ENCODE measurements at regions of chr3 and their contacts with region 1.

Region 1: DNA sequence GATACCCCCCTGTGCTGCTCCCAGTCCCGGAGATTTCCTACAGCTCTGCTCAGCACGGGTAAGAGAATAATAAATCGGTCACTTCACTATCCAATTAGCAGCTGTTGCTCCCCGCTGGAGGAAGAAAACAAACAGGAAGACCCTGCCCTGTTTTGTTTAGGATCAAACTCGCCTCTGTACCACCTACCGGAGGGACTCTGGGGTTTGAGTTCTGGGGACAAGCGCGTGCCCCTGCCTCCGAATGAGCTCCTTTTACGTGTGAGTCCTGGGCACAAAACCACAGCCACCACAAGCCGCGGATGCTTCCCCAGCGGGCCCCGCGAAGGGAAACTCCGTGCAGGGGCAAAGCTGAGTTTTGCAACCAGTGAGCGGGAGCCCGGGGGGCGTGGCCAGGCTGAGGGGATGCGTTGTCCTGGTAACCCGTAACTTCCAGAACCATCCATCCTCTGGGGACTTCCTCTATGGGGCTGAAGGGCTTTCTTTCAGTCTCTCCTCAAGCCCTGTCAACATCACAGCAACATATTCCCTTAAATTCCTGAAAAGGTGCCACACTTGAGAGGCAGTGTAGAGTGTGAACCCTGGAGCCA is 315.7 kb upstream of the PROK2 start:
- DNase-seq: peak; percentile 99 to 100 (median 99)
- H3K4me3 ChIP-seq: peak overlapping the region; percentile 47 to 66 (median 48)
- H3K4me3 Mint-ChIP-seq: peak overlapping the region; percentile 81 to 91
- H3K27ac ChIP-seq: peak overlapping the region; percentile 97 to 99
- H3K27ac Mint-ChIP-seq: peak overlapping the region; percentile 100
- H3K4me1 ChIP-seq: peaks cover 60 to 61% of the 10 kb centered on the region in 2 donors
- H3K4me1 Mint-ChIP-seq: peaks cover 65% of the 10 kb centered on the region
- H3K27me3 ChIP-seq: no peaks in the 10 kb centered on the region
- H3K27me3 Mint-ChIP-seq: peaks cover 1 to 7% (median 1%) of the 10 kb centered on the region in 3 donors
- CTCF ChIP-seq: no peak

Region 2: GRCh38 chr3:71548705-71549384 is 551.8 kb before region 1 on chr3:
- intact Hi-C with region 1: no loop called
- DNase-seq: peak in 1 of 3 donors; percentile 31
- H3K4me3 ChIP-seq: peak overlapping the region in 1 of 3 experiments; percentile 70
- H3K4me3 Mint-ChIP-seq: no peak overlapping the region
- H3K27ac ChIP-seq: peak overlapping the region; percentile 86 to 87
- H3K27ac Mint-ChIP-seq: peak overlapping the region; percentile 90 to 98 (median 95)
- H3K4me1 ChIP-seq: peaks cover 71 to 84% of the 10 kb centered on the region in 2 donors
- H3K4me1 Mint-ChIP-seq: peaks cover 70% of the 10 kb centered on the region
- H3K27me3 ChIP-seq: no peaks in the 10 kb centered on the region
- H3K27me3 Mint-ChIP-seq: no peaks in the 10 kb centered on the region
- CTCF ChIP-seq: no peak

Region 3: DNA sequence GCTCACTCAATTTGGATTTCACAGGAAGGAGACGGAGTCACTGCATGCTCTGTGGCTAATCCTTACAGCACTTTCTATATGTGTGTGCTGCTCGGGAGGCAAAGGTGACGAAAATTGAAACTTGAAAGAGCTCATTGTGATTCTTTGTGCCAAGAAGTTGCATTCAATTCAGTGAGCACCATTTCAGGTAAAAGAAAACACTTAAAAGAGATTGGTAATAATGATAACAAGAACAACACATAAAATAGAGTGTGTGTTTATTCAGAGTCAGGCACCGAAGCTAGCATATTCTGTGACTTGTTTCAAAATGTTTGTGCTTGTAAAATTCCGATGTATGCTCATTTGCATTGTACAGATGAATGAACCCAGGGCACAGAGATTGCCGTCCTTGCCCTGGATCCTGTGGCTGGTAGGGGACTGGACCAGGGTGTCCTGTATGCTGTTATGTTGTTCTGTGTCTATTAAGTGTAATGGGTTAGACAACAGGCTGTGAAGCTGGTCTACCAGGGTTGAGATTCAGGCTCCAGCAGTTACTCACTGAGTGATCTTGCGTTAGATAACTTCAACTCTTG is 122.5 kb before region 1 on chr3:
- intact Hi-C with region 1: loop called in 1 of 2 experiments (anchors 5 kb)
- DNase-seq: no peak
- H3K4me3 ChIP-seq: no peak overlapping the region
- H3K4me3 Mint-ChIP-seq: no peak overlapping the region
- H3K27ac ChIP-seq: no peak overlapping the region
- H3K27ac Mint-ChIP-seq: peak overlapping the region in 1 of 7 donors; percentile 52
- H3K4me1 ChIP-seq: peaks cover 15 to 17% of the 10 kb centered on the region in 2 donors
- H3K4me1 Mint-ChIP-seq: peaks cover 34% of the 10 kb centered on the region
- H3K27me3 ChIP-seq: no peaks in the 10 kb centered on the region
- H3K27me3 Mint-ChIP-seq: peaks cover 5 to 8% (median 6%) of the 10 kb centered on the region in 3 donors
- CTCF ChIP-seq: no peak

Region 4: DNA sequence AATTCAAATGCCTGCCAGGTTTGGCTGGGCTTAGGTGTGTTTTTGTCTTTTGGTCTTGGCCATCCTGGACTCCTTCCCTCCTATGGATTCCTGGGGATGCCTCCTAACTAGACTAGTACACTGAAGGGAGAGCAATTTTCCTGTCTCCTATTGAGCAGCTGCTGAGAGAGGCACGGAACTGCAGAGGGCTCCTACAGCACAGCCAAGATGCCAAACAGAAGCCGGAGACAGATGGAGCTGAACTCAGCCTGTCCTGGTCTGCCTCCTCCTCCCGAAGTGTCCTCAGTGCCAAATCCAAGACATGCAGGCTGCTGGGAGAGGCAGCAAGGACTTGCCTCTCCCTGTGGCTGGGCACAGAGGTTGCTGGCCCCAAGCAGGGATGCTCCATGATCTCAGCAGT is 59.2 kb before region 1 on chr3:
- intact Hi-C with region 1: loop called in 1 of 2 experiments (anchors 5 kb)
- DNase-seq: no peak
- H3K4me3 ChIP-seq: no peak overlapping the region
- H3K4me3 Mint-ChIP-seq: no peak overlapping the region
- H3K27ac ChIP-seq: no peak overlapping the region
- H3K27ac Mint-ChIP-seq: peak overlapping the region in 2 of 7 donors; percentile 28 to 94
- H3K4me1 ChIP-seq: peaks cover 33% of the 10 kb centered on the region in 2 donors
- H3K4me1 Mint-ChIP-seq: peaks cover 37% of the 10 kb centered on the region
- H3K27me3 ChIP-seq: no peaks in the 10 kb centered on the region
- H3K27me3 Mint-ChIP-seq: peaks cover 0 to 3% (median 2%) of the 10 kb centered on the region in 3 donors
- CTCF ChIP-seq: no peak

Region 5: DNA sequence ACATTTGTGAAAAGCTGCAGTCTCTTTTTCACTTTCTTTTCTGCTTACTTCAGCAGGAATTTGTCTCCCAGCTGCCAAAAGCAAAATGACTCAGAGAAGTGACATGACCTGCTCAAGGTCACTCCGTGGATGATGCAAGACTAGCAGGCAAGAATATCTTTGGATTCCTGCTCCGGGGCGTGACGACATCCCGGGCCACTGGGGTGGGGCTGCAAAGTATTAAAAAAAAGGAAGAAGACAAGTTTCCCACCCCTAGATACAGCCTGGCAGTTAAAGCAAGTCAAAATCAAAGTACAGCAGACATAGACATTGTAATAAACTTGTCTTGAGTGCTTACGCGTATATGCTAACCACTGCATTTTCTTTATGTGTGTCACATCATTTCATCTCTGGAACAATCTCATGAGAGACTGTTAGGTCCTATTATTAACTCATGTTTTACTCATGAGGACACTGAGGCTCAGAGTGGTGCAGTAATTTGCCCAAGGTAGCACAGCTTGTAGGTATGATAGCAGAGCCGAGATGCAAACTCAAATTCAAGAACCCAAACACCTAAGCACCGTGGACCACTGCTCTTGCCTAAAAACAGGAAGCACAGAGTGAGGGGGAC is 169.5 kb after region 1 on chr3:
- intact Hi-C with region 1: loop called (anchors 5 kb)
- DNase-seq: peak; percentile 96 to 99 (median 97)
- H3K4me3 ChIP-seq: peak overlapping the region in 1 of 3 experiments; percentile 25
- H3K4me3 Mint-ChIP-seq: peak overlapping the region in 1 of 2 donors; percentile 69
- H3K27ac ChIP-seq: peak overlapping the region; percentile 75 to 92
- H3K27ac Mint-ChIP-seq: peak overlapping the region; percentile 96 to 98 (median 97)
- H3K4me1 ChIP-seq: peaks cover 64 to 74% of the 10 kb centered on the region in 2 donors
- H3K4me1 Mint-ChIP-seq: peaks cover 84% of the 10 kb centered on the region
- H3K27me3 ChIP-seq: no peaks in the 10 kb centered on the region
- H3K27me3 Mint-ChIP-seq: peaks cover 0 to 7% (median 6%) of the 10 kb centered on the region in 3 donors
- CTCF ChIP-seq: no peak